ENCODE measurements at regions of chr12 and their contacts with region 1.

Region 1: GRCh38 chr12:92561543-92561899 is 141.3 kb upstream of the PLEKHG7 start:
- DNase-seq: no peak

Region 2: DNA sequence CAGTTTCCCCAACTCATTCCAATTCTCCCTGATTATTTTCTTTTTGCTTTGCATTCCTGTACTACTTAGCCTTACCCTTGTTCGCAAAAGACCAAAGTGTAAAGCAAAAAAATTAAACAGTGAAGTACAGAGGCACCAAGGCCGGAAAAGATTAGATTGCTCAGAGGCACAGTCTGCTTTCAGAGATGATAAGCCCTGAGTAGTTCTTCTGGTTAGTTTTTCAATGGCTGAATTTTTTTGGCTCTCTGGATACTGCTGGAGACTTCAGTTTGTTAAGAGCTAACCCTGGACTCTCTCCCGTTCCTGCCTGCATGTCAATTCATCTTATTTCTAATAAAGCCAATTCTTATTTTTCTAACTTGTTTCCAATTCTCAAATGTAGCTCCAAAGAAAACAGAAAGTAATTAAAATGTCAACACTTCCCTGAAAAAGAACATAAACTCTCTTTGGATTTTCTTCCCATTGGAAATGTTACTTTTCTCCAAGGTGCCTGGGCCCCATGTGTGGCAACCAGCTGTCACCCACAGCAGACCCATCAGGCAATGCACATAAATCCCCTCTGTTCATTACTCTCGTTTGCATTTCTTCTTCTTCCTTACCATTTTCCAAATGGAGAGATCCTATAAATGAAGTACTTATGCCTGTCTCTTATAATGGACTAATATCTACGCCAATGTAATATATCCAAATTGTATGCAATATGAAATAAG is 558.7 kb before region 1 on chr12:
- intact Hi-C with region 1: loop called (anchors 10 kb)
- DNase-seq: no peak

Region 3: GRCh38 chr12:92244036-92244435 is 317.5 kb before region 1 on chr12:
- intact Hi-C with region 1: loop called (anchors 10 kb)
- DNase-seq: no peak

Region 4: DNA sequence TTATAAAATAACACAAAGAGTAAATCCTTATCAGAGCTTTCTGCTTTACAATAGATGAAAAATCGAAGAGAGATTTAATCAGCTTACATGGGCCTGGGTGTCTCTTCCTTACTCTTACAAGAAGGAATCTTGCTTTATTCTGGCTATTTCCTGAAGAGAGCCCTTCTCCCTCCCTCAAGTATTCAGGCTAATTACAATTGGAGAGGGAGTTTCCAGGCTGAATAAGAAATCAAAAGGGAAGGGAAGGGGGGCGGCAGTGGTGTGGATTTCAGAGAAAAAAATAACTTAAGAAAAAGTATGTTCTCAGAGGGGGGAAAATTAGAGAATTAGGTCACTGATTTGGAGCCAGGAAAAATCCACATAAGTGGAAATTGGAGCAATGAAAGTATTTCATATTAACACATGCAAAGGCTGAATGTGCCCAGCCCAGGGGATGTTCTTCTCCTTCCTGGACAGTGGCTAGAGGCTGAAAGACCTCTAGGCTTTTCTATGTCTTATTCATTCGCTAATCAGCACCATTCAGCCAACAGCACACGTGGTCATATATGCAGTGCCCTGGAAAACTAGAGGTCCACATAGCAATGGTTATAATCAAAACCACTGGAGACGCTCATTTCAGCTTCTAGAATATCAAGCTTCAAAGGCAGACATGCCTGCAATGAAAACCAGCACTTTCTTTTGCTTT is 257.0 kb before region 1 on chr12:
- intact Hi-C with region 1: loop called (anchors 10 kb)
- DNase-seq: no peak

Region 5: DNA sequence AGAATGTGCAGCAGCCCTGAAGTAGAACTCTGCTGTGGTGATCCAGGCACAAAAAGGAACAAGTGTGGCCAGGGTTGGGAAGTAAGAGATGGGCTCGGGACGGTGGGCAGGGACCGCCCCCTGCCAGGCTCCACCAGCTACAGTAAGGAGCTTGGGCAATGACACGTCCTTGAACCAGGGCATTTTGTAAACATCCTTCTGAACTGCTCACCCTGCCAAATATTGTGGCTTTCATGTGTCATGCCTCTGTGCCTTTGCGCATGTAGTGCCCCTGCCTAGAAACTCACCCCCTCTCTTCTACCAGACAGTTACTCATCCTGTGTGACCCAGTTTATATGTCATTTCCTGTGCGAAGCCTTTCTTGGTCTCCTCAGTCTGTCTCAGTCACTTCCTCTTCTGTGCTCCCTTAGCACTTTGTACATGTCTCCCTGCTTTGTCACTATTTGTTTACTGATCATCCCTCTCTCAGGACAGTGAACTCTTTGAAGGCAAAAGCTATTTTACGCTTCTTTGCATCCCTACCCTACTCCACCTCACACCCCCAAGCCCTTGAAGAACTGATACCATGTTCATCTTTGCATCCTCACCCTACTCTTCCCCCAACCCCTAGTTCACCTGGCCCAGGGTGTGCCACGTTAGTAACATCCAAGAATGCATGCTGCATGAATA is 32.3 kb after region 1 on chr12:
- intact Hi-C with region 1: no loop called
- DNase-seq: no peak

Measured in cardiac septum (tissue), 1 donor.